Activated T-helper 1 cell treated with anti-CD3 and anti-CD28 coated beads, Interleukin-12 subunit alpha, Interleukin-12 subunit beta, Interleukin-2, Interleukin-4 antibody, amounts not matched to agents 30 ng/mL and 10 ng/mL and 1 ng/mL, durations not matched to agents 14 hours and 24 hours and 36 hours (primary cell): ENCODE measurements at regions of chr6 and their contacts with region 1.

Region 1: GRCh38 chr6:52227495-52227894 is 16.8 kb downstream of the IL17F start:
- DNase-seq: peak; percentile 72
- H3K4me3 Mint-ChIP-seq: peak overlapping the region; percentile 2
- H3K27ac Mint-ChIP-seq: peak overlapping the region; percentile 58
- H3K4me1 Mint-ChIP-seq: peaks cover 51% of the 10 kb centered on the region
- H3K27me3 Mint-ChIP-seq: peaks cover 55% of the 10 kb centered on the region

Region 2: GRCh38 chr6:52157301-52157941 is 70.1 kb before region 1 on chr6:
- intact Hi-C with region 1: loop called (anchors 1 kb)
- DNase-seq: no peak
- H3K4me3 Mint-ChIP-seq: no peak overlapping the region
- H3K27ac Mint-ChIP-seq: peak overlapping the region; percentile 71
- H3K4me1 Mint-ChIP-seq: peaks cover 52% of the 10 kb centered on the region
- H3K27me3 Mint-ChIP-seq: peaks cover 22% of the 10 kb centered on the region

Region 3: DNA sequence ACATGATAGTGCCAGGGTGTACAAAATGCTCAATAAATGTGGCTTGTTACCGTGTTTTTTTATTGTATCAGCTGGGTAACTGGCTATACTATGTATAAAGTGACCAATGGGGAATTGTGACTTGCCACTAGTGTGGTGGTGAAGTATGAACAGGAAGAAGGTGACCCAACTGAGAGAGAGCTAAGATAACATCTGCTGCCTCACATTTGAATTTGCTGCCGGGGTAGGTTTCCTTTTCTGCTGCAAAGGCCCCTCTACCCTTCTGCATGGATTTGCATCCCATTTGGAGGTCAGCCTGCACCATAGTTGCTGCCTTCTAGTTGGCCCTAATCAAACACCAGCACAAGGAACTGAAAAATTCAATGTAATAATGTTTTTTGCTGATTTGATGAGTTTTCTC is 17.3 kb before region 1 on chr6:
- intact Hi-C with region 1: loop called (anchors 1 kb)
- DNase-seq: no peak
- H3K4me3 Mint-ChIP-seq: no peak overlapping the region
- H3K27ac Mint-ChIP-seq: no peak overlapping the region
- H3K4me1 Mint-ChIP-seq: no peaks in the 10 kb centered on the region
- H3K27me3 Mint-ChIP-seq: peaks cover 49% of the 10 kb centered on the region

Region 4: GRCh38 chr6:52253494-52253893 is 26.0 kb after region 1 on chr6:
- intact Hi-C with region 1: loop called (anchors 1 kb)
- DNase-seq: peak; percentile 19
- H3K4me3 Mint-ChIP-seq: no peak overlapping the region
- H3K27ac Mint-ChIP-seq: no peak overlapping the region
- H3K4me1 Mint-ChIP-seq: peaks cover 32% of the 10 kb centered on the region
- H3K27me3 Mint-ChIP-seq: peaks cover 54% of the 10 kb centered on the region

Region 5: GRCh38 chr6:52263709-52264540 is 36.4 kb after region 1 on chr6:
- intact Hi-C with region 1: no loop called
- DNase-seq: peak; percentile 63
- H3K4me3 Mint-ChIP-seq: no peak overlapping the region
- H3K27ac Mint-ChIP-seq: peak overlapping the region; percentile 47
- H3K4me1 Mint-ChIP-seq: peaks cover 7% of the 10 kb centered on the region
- H3K27me3 Mint-ChIP-seq: no peaks in the 10 kb centered on the region

Region 6: DNA sequence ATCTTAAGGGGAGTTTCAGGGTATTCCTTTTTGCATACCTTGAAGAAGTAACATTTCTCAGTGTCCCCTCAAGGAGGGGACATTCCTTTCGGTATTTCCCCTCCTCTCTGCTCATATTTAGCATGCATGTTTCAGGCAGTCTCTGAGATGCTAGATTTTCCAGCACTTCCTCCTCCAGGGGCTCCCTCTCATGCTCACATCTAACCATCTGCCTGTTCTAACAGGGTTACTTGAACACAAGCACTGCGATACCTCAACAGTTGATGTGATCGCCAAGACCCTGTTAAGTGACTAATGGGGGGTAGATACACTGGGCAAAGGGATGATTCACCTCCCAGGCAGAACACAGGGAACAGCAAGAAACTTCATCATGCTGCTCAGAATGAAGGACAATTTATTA is 69.9 kb after region 1 on chr6:
- intact Hi-C with region 1: loop called (anchors 2 kb)
- DNase-seq: no peak
- H3K4me3 Mint-ChIP-seq: peak overlapping the region; percentile 23
- H3K27ac Mint-ChIP-seq: peak overlapping the region; percentile 53
- H3K4me1 Mint-ChIP-seq: peaks cover 40% of the 10 kb centered on the region
- H3K27me3 Mint-ChIP-seq: no peaks in the 10 kb centered on the region

Region 7: DNA sequence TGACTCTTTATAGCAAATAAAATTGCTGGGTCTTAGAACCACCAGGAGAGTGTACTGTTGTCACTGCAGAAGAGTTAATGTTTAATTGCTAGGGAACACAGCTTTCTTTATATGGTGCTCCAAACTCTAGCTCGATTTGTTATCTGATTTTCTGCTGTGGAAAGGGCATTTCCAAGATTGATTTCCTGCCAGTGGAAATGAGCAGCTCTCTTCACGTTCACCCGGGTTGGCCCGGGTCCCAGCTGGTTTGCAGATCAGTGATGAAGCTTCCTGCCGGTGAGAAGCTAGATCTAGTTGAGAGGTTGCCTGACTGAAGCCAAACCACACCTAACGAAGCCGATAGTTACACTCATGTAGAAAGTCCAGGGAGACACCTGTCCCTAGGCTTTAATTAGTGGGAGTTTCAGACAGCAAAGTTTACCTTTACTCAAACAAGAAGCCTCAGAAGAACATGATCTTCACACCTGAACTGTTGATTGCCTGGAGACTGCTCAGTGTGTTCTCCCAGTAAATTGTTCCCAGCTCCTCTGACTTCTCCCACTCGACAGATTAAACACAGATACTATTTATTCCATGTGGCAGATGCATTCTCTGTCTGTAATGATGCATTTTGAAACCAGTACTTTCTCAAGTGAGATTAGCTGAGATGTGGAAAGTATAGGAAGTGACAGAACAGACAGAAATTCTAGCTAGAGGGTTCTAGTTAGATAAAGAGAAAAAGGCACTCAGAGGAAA is 162.3 kb after region 1 on chr6:
- intact Hi-C with region 1: loop called (anchors 1 kb)
- DNase-seq: peak; percentile 45
- H3K4me3 Mint-ChIP-seq: peak overlapping the region; percentile 66
- H3K27ac Mint-ChIP-seq: peak overlapping the region; percentile 88
- H3K4me1 Mint-ChIP-seq: peaks cover 62% of the 10 kb centered on the region
- H3K27me3 Mint-ChIP-seq: peaks cover 4% of the 10 kb centered on the region

Region 8: GRCh38 chr6:52577022-52577777 is 349.7 kb after region 1 on chr6 and contains the start of gene TRAM2:
- intact Hi-C with region 1: loop called (anchors 5 kb)
- DNase-seq: peak; percentile 69
- H3K4me3 Mint-ChIP-seq: peak within 1 kb of the TSS; percentile 79
- H3K27ac Mint-ChIP-seq: peak within 1 kb of the TSS; percentile 66
- H3K4me1 Mint-ChIP-seq: peaks cover 39% of the 10 kb centered on the region
- H3K27me3 Mint-ChIP-seq: peaks cover 14% of the 10 kb centered on the region
- total RNA-seq, gene TRAM2: 2.1 and 2.5 TPM in 2 replicates